Heart right ventricle (tissue), 16 donors: ENCODE measurements at regions of chr15 and their contacts with region 1.

Region 1: GRCh38 chr15:80712956-80713355 is 17.8 kb downstream of the ABHD17C start:
- DNase-seq: no peak
- ATAC-seq: no peak
- H3K4me3 ChIP-seq: no peak overlapping the region
- H3K27ac ChIP-seq: no peak overlapping the region
- H3K4me1 ChIP-seq: no peaks in the 10 kb centered on the region
- H3K27me3 ChIP-seq: no peaks in the 10 kb centered on the region
- CTCF ChIP-seq: no peak

Region 2: GRCh38 chr15:80404057-80404715 is 308.8 kb before region 1 on chr15 and contains the start of gene ARNT2:
- intact Hi-C with region 1: no loop called
- DNase-seq: peak; percentile 16 to 30
- ATAC-seq: peak; percentile 30 to 72 (median 48)
- H3K4me3 ChIP-seq: peak within 1 kb of the TSS in 9 of 10 donors; percentile 31 to 60 (median 49)
- H3K27ac ChIP-seq: peak within 1 kb of the TSS in 1 of 10 donors; percentile 28
- H3K4me1 ChIP-seq: peaks cover 0 to 12% (median 7%) of the 10 kb centered on the region in 9 donors
- H3K27me3 ChIP-seq: peaks cover 0 to 72% (median 20%) of the 10 kb centered on the region in 7 donors
- CTCF ChIP-seq: no peak
- total RNA-seq, gene ARNT2: 1.7 to 6.7 (median 4.5) TPM

Region 3: GRCh38 chr15:80701676-80702311 is 11.2 kb before region 1 on chr15:
- intact Hi-C with region 1: loop called in 1 of 10 experiments (anchors 1 kb)
- DNase-seq: no peak
- ATAC-seq: no peak
- H3K4me3 ChIP-seq: no peak overlapping the region
- H3K27ac ChIP-seq: no peak overlapping the region
- H3K4me1 ChIP-seq: peaks cover 0 to 10% (median 4%) of the 10 kb centered on the region in 9 donors
- H3K27me3 ChIP-seq: no peaks in the 10 kb centered on the region
- CTCF ChIP-seq: no peak

Region 4: GRCh38 chr15:80776420-80777045 is 63.6 kb after region 1 on chr15:
- intact Hi-C with region 1: no loop called
- DNase-seq: peak; percentile 27 to 77
- ATAC-seq: peak; percentile 37 to 63 (median 54)
- H3K4me3 ChIP-seq: no peak overlapping the region
- H3K27ac ChIP-seq: peak overlapping the region in 4 of 10 donors; percentile 17 to 61 (median 28)
- H3K4me1 ChIP-seq: peaks cover 14 to 53% (median 38%) of the 10 kb centered on the region in 9 donors
- H3K27me3 ChIP-seq: peaks cover 0 to 44% (median 37%) of the 10 kb centered on the region in 7 donors
- CTCF ChIP-seq: peak; percentile 79 to 90 (median 87)